PC-3 (cell line): ENCODE measurements at regions of chr14 and their contacts with region 1.

Region 1: GRCh38 chr14:90399541-90400444 is 3.0 kb downstream of the CALM1 start:
- DNase-seq: peak; percentile 96
- ATAC-seq: peak; percentile 50
- H3K4me3 ChIP-seq: peak overlapping the region; percentile 95
- H3K27ac ChIP-seq: no peak overlapping the region
- H3K4me1 ChIP-seq: peaks cover 23% of the 10 kb centered on the region
- H3K27me3 ChIP-seq: no peaks in the 10 kb centered on the region
- CTCF ChIP-seq: peak; percentile 100

Region 2: GRCh38 chr14:90301668-90302090 is 98.1 kb before region 1 on chr14:
- CTCF ChIA-PET with region 1: interaction called, 7 read pairs
- POLR2A ChIA-PET with region 1: interaction called, 9 read pairs
- intact Hi-C with region 1: loop called (anchors 1 kb)
- DNase-seq: peak; percentile 60
- ATAC-seq: peak; percentile 69
- H3K4me3 ChIP-seq: no peak overlapping the region
- H3K27ac ChIP-seq: no peak overlapping the region
- H3K4me1 ChIP-seq: no peaks in the 10 kb centered on the region
- H3K27me3 ChIP-seq: no peaks in the 10 kb centered on the region
- CTCF ChIP-seq: peak; percentile 66

Region 3: DNA sequence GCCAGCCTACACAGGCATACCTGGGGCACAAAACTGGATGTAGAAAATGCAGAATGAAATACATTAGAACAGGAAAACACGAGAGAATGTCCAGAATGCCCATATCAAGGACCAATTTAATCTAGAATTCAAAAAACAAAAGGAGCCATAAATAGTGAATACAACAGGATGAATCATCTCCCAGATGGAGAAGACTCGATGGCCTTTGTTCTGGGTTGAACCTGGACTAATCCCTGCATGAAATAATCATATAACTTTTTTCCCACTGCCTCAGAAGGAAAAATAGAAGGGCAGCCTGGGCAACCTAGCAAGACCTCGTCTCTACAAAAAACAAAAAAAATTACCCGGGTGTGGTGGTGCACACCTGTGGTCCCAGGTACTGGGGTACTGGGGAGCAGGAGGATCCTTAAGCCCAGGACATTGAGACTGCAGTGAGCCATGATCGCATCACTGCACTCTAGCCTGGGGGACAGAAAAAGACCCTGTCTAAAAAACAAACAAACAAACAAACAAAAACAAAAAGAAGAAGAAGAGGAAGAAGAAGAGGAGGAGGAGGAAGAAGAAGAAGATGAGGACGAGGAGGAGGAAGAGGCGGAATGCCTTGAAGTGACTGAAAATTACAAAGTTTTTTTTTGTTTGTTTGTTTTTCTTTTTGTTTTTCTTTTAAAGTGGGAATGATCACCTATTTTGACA is 37.8 kb before region 1 on chr14:
- CTCF ChIA-PET with region 1: no interaction called
- POLR2A ChIA-PET with region 1: no interaction called
- intact Hi-C with region 1: no loop called
- DNase-seq: no peak
- ATAC-seq: no peak
- H3K4me3 ChIP-seq: no peak overlapping the region
- H3K27ac ChIP-seq: no peak overlapping the region
- H3K4me1 ChIP-seq: no peaks in the 10 kb centered on the region
- H3K27me3 ChIP-seq: peaks cover 35% of the 10 kb centered on the region
- CTCF ChIP-seq: no peak

Region 4: DNA sequence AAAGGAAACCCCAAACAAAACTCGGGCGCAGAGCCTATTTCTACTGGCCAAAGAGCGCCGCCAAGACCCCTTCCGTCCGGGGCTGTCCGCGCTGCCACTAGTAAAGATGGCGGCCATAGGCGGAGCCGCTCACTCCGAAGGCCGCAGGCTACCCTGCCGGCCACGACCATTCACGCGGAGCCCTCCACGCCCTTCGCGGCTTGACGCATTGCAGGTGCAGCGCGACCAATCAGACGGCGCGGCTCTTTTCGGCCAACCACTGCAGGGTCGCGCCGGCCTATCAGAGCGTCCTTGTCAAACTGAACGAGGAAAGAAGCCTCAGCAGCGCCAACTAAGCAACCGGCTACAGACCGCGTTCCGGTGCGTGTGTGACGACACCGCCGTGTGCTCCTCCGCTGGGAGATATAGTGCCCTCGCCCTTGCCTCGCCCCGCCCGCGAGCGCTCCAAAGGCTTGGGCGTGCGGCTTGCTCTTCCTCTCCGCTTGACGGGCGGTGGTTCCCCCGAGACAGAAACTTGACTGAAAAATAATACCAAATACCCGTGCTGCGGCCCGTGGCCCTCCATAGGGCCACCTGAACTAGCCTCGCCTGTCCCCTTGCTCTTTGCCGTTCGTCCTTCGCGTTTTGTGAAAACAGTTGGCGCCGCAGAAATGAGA is 16.6 kb before region 1 on chr14:
- CTCF ChIA-PET with region 1: interaction called, 8 read pairs
- POLR2A ChIA-PET with region 1: interaction called, 9 read pairs
- intact Hi-C with region 1: loop called (anchors 1 kb)
- DNase-seq: peak; percentile 100
- ATAC-seq: peak; percentile 92
- H3K4me3 ChIP-seq: peak overlapping the region; percentile 82
- H3K27ac ChIP-seq: peak overlapping the region; percentile 86
- H3K4me1 ChIP-seq: peaks cover 35% of the 10 kb centered on the region
- H3K27me3 ChIP-seq: no peaks in the 10 kb centered on the region
- CTCF ChIP-seq: 0 out of 2 replicates have a peak, but pooled peaks have one; percentile 10

Region 5: GRCh38 chr14:90513161-90514014 is 113.6 kb after region 1 on chr14:
- CTCF ChIA-PET with region 1: interaction called, 6 read pairs
- POLR2A ChIA-PET with region 1: interaction called, 9 read pairs
- intact Hi-C with region 1: loop called (anchors 1 kb)
- DNase-seq: peak; percentile 90
- ATAC-seq: peak; percentile 91
- H3K4me3 ChIP-seq: peak overlapping the region; percentile 13; the same call in 1 of the 2 replicates
- H3K27ac ChIP-seq: peak overlapping the region; percentile 90
- H3K4me1 ChIP-seq: peaks cover 46% of the 10 kb centered on the region
- H3K27me3 ChIP-seq: 0 out of 2 replicates have a peak, but pooled peaks cover 4% of the 10 kb centered on the region
- CTCF ChIP-seq: no peak

Region 6: GRCh38 chr14:90677484-90678050 is 277.8 kb after region 1 on chr14:
- CTCF ChIA-PET with region 1: no interaction called
- POLR2A ChIA-PET with region 1: no interaction called
- intact Hi-C with region 1: loop called (anchors 5 kb)
- DNase-seq: peak; percentile 79
- ATAC-seq: peak; percentile 98
- H3K4me3 ChIP-seq: no peak overlapping the region
- H3K27ac ChIP-seq: peak overlapping the region; percentile 62
- H3K4me1 ChIP-seq: peaks cover 20% of the 10 kb centered on the region
- H3K27me3 ChIP-seq: no peaks in the 10 kb centered on the region
- CTCF ChIP-seq: no peak

Region 7: GRCh38 chr14:90726656-90727055 is 326.9 kb after region 1 on chr14:
- CTCF ChIA-PET with region 1: no interaction called
- POLR2A ChIA-PET with region 1: no interaction called
- intact Hi-C with region 1: loop called (anchors 1 kb)
- DNase-seq: peak; percentile 73
- ATAC-seq: peak; percentile 97
- H3K4me3 ChIP-seq: no peak overlapping the region
- H3K27ac ChIP-seq: no peak overlapping the region
- H3K4me1 ChIP-seq: peaks cover 5% of the 10 kb centered on the region; the same call in 1 of the 2 replicates
- H3K27me3 ChIP-seq: no peaks in the 10 kb centered on the region
- CTCF ChIP-seq: peak; percentile 56

Region 8: DNA sequence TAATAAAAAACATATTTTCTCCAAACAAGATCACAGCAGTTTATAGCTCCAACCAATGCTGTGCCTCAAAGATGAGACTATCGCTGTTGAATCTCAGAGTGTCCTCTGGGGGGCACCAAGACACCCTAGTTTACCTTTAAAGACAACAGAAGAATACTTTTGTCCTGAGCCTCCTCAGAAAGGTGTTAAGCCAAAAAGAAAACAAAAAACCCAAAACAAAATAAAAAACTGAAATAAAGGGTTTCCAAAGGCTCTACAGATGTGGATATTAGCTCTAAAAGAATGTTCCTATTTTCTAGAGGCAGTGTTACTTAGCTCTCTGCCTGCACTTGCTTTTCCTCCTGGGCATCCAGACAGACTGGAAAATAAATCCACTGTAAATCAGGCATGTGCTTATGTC is 503.3 kb after region 1 on chr14:
- CTCF ChIA-PET with region 1: no interaction called
- POLR2A ChIA-PET with region 1: no interaction called
- intact Hi-C with region 1: loop called (anchors 1 kb)
- DNase-seq: peak; percentile 75
- ATAC-seq: peak; percentile 99
- H3K4me3 ChIP-seq: no peak overlapping the region
- H3K27ac ChIP-seq: no peak overlapping the region
- H3K4me1 ChIP-seq: no peaks in the 10 kb centered on the region
- H3K27me3 ChIP-seq: no peaks in the 10 kb centered on the region
- CTCF ChIP-seq: peak; percentile 91